Prostate gland (tissue), 2 donors: ENCODE measurements at regions of chr4 and their contacts with region 1.

Region 1: DNA sequence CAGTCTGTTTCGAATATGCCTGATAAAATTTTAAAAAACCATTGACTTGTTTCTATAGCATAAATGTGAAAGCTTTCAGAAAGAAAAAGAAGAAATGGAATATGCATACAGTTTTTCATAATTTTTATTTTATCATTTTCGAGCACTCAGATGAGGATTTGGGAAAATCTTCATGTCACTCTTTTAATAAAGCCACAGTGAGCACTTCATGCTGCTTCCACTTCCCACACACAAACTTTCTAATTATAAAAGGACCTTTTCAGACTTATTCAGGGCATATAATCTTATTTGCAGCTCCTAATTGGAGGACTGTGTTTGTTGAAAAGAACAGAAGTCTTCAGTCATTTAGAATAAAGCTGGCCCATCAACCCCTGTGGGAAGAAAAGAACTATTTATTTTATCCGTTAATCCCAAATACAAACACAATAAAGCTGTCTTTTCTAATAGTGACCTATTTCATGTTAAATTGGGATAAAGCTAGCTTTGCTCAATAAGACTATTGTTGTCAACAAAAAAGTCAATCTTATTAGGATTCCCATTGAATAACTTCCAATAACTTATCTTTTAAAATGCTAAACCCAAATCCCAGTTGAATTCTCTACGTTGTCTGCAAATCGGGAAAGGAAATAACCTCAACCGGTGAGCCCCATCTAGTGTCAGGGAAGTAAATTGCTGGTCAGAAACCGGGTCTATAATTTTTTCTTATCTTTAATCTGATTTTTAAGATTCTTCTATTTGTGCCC is 211.5 kb downstream of the PDGFRA start:
- DNase-seq: no peak
- H3K4me3 ChIP-seq: no peak overlapping the region
- H3K27ac ChIP-seq: no peak overlapping the region
- H3K4me1 ChIP-seq: no peaks in the 10 kb centered on the region
- H3K27me3 ChIP-seq: no peaks in the 10 kb centered on the region
- CTCF ChIP-seq: peak in 2 of 4 experiments; percentile 31 to 42
- POLR2A ChIP-seq: no peak

Region 2: DNA sequence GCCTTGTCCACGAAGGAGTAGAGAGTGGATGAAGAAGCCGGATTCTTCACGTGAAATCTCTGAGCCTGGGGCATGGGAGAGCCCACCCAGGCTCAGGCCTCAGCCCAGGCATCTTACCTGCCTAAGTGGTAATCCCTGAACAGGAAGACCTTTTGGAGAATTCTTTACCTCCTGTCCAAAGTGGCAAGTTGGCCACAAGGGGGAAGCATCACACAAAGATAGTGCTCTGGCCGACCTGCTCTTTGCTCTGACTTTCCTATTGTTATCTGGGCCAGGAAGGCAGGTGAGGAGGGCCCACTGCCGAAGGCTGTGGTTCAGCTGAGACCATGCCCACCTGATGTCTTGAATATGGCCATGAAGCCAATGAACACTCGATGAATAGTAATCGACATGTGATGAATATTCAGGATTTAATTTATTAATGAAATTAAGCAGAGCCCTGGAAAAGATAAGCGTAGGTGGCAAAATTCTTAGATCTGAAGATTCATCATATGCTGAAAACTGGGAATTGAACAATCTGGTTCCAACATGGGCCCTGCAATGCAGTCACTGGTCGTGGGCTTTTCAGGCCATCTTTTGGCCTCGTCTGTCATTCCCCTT is 117.6 kb before region 1 on chr4:
- intact Hi-C with region 1: loop called (anchors 5 kb)
- DNase-seq: peak; percentile 60
- H3K4me3 ChIP-seq: no peak overlapping the region
- H3K27ac ChIP-seq: no peak overlapping the region
- H3K4me1 ChIP-seq: no peaks in the 10 kb centered on the region
- H3K27me3 ChIP-seq: no peaks in the 10 kb centered on the region
- CTCF ChIP-seq: peak in 3 of 4 experiments; percentile 58 to 75 (median 72)
- POLR2A ChIP-seq: no peak

Region 3: DNA sequence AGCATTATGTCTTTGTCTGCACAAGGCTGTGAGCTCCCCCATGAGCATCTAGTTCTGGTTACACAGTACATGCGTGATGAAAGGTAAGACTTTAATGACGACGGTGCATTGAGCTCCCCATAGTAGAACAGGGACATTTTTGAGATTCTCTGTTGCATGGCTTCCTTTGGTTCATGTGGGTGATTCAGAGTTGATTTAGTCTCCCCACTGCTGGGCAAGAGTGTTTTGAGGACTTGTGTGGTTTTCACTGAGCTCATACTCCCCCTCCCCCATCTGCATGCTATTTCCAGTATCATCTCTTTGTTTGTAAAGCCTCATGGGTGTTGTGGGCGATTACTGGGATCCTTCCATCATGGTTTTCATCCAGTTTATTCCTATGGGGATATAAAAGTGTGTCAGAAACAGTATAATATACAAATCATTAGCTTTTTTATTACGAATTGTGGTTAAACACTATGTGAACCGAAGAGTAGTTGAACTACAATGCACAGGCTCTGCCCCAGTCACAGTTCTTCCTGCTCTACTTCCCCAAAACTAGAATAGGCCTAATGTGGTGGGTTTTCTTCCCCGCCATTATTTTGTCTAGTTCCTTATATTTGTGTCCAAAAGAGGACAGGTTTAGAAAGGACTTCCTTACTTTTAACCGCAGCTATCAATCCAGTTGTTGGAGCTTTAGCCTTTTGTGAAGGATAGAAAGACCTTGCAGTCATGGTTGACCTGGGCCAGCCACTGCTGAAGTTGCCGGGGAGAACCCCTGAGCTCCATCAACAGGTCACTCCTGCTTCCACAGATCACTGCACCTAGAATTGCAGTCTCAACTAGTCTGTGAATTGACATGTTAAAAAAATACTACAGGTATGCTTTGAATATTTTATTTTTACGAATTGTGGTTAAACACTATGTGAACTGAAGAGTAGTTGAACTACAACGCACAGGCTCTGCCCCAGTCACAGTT is 247.6 kb after region 1 on chr4:
- intact Hi-C with region 1: no loop called
- DNase-seq: no peak
- H3K4me3 ChIP-seq: no peak overlapping the region
- H3K27ac ChIP-seq: no peak overlapping the region
- H3K4me1 ChIP-seq: no peaks in the 10 kb centered on the region
- H3K27me3 ChIP-seq: no peaks in the 10 kb centered on the region
- CTCF ChIP-seq: no peak
- POLR2A ChIP-seq: no peak

Region 4: GRCh38 chr4:54780149-54780495 is 339.6 kb after region 1 on chr4:
- intact Hi-C with region 1: no loop called
- DNase-seq: no peak
- H3K4me3 ChIP-seq: no peak overlapping the region
- H3K27ac ChIP-seq: no peak overlapping the region
- H3K4me1 ChIP-seq: no peaks in the 10 kb centered on the region
- H3K27me3 ChIP-seq: no peaks in the 10 kb centered on the region
- CTCF ChIP-seq: no peak
- POLR2A ChIP-seq: no peak